IMR-90 (cell line): ENCODE measurements at regions of chr3 and their contacts with region 1.

Region 1: DNA sequence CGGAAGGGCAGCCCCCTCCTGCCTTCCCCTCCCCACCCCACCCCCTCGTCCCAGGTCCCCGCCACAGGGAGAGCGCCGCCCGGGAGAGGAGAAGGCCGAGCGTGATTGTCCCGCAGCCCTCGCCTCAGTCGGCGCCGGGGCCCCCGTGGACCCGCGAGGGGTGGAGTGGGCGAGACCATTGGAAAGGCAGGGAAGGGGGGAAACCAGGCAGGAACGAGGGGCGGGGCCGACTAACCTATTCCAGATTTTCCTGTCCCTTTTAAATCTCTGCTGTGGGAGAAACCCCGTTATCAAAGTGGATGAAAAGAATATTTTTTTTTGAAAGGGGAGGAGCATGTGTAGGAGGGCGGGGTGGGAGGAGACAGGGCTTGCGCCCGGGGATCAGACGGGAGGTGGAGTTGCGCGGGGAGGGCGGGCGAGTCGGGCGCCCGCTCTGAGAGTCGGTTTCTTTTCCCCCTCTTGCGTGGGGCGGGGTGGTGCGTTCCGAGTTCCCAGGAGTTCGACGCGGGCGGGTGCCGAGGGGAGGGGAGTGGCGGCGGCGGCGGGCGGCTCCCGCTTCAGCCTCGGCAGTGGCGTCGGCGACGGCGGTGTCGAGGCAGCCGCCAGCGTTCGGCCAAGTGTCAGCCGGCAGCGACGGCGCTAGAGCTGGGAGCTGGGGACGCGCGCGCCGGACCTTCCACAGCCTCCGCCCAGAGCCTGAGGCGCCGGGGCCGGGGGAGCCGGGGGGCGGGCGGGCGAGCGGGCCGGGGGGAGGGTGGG is at the start of gene NECTIN3:
- DNase-seq: peak; percentile 99
- ATAC-seq: peak; percentile 90
- H3K4me3 ChIP-seq: peak within 1 kb of the TSS; percentile 98
- H3K27ac ChIP-seq: peak within 1 kb of the TSS; percentile 99
- H3K4me1 ChIP-seq: no peaks in the 10 kb centered on the region; the same call in 1 of the 2 replicates
- H3K27me3 ChIP-seq: no peaks in the 10 kb centered on the region
- CTCF ChIP-seq: no peak
- POLR2A ChIP-seq: peak; percentile 72
- RAD21 ChIP-seq: 0 out of 2 replicates have a peak, but pooled peaks have one; percentile 6
- total RNA-seq, gene NECTIN3: 155 and 182 TPM in 2 replicates

Region 2: DNA sequence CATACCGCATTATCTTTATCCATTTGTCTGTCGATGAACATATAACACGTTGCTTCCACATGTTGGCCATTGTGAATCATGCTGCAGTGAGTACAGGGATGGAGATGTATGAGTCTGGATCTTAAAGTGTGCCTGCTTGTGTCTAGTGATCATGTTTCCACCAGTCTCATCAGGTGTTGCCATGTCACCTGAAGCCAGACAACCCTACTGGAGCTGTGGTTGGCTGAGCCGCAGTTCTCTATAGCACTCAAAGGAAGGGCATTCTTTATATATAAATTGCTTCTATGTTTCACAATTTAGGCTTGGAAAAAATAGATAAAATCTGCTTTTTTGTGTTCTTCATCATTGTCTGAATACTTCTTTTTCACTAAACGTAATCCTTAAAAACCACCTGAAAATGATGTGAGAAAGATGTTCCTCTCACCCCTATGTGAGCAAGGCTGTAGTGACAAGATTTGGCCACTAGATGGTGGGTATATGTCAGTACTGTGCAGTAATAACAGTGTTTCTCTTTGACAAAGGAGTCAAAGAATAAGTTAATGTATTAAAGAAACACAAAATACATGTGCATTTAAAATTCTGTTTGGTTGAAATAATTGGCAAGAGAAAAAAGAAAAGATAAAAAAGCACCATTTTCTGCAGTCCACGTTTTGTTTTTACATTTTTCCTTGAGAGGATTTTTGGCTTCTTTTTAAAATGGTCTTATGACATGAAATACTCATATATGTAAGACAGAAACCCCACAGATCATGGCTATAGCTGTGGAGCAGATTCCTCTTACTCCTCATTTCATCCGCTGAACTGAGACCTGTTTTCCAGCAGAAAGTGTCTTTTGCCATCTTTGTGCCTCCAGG is 1339.6 kb before region 1 on chr3:
- CTCF ChIA-PET with region 1: no interaction called
- POLR2A ChIA-PET with region 1: no interaction called
- dilution Hi-C with region 1: no loop called
- in situ Hi-C with region 1: loop called (anchors 5 kb)
- intact Hi-C with region 1: loop called (anchors 2 kb)
- DNase-seq: peak; percentile 72
- ATAC-seq: peak; percentile 99
- H3K4me3 ChIP-seq: no peak overlapping the region
- H3K27ac ChIP-seq: no peak overlapping the region
- H3K4me1 ChIP-seq: no peaks in the 10 kb centered on the region; the same call in 1 of the 2 replicates
- H3K27me3 ChIP-seq: no peaks in the 10 kb centered on the region
- CTCF ChIP-seq: peak; percentile 85
- POLR2A ChIP-seq: no peak
- RAD21 ChIP-seq: peak; percentile 90

Region 3: DNA sequence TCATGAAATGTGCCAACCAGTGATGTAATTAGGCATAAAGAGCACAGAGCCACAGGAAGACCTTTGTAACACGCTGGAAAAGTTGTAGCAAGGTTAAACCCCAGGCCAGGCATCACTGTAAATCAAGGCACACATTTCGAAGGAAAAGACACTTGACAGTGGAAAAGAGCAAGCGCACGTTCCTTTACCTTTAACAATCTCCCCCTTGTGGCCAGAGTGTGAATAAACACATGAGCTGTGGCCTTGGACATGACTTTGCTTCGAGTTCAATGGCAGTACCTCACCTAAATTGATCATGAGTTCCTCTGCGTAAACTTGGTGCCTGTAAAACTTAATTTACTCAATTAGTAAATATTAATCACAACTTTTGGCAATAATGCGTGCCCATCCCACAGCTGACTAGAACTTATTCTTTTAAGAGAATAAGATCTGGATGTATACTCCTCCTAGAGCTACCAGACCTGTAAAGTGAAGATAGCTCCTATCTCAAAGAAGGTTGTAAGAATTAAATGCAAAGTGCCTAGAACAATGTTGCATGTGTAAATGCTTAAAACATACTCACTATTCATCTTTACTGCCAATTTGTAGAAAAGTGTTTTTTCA is 756.8 kb before region 1 on chr3:
- CTCF ChIA-PET with region 1: no interaction called
- POLR2A ChIA-PET with region 1: no interaction called
- dilution Hi-C with region 1: no loop called
- in situ Hi-C with region 1: no loop called
- intact Hi-C with region 1: loop called (anchors 5 kb)
- DNase-seq: peak; percentile 39
- ATAC-seq: no peak
- H3K4me3 ChIP-seq: no peak overlapping the region
- H3K27ac ChIP-seq: no peak overlapping the region
- H3K4me1 ChIP-seq: no peaks in the 10 kb centered on the region; the same call in 1 of the 2 replicates
- H3K27me3 ChIP-seq: no peaks in the 10 kb centered on the region
- CTCF ChIP-seq: peak; percentile 42
- POLR2A ChIP-seq: no peak
- RAD21 ChIP-seq: peak; percentile 44

Region 4: DNA sequence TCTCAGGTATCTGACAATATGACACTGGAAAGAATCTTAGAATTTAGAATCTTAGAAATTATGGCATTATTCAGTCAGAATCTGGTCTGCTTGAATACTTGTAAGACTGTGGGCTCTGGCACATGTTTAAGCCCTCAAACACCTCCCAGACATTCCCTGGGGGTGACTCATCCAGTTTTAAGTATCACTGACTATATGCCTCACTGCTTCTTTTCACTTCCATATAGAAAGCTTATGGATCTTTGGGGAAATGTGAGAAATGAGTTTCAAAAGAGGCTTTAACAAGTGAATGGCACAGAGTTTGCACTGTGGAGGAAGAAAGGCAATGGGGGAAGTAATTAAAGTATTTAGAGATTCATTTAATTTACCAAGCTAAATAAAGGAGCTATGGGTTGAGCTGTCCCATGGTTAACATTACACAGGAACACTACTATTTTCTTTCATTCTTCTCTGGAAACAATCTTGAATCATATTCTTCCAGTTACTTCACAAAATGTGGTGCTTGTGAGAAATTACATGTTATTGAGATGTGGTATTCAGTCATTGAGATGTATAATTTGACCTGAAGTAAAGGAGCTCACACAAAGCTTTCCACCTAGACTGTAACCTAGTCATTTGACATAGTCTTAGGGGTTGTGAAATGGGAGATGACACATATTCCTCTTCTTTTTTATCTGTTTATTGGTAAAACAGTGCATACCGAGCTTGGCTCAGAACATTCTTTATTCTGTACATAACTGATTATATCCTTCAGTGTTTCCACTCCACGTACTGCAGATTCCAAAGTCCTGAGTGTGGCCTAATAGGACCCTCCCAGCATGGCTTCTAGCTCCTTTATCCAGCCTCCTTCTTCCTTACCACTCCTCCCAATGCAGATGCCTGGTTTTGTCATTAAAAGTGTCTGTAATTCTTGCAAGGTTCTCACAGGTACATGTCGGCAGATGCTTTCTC is 544.4 kb before region 1 on chr3:
- CTCF ChIA-PET with region 1: no interaction called
- POLR2A ChIA-PET with region 1: interaction called, 5 read pairs
- dilution Hi-C with region 1: no loop called
- in situ Hi-C with region 1: no loop called
- intact Hi-C with region 1: loop called (anchors 2 kb)
- DNase-seq: peak; percentile 95
- ATAC-seq: peak; percentile 90
- H3K4me3 ChIP-seq: no peak overlapping the region
- H3K27ac ChIP-seq: peak overlapping the region; percentile 67
- H3K4me1 ChIP-seq: peaks cover 15% of the 10 kb centered on the region
- H3K27me3 ChIP-seq: no peaks in the 10 kb centered on the region
- CTCF ChIP-seq: no peak
- POLR2A ChIP-seq: no peak; the same call in 1 of the 2 replicates
- RAD21 ChIP-seq: no peak; the same call in 1 of the 2 replicates

Region 5: DNA sequence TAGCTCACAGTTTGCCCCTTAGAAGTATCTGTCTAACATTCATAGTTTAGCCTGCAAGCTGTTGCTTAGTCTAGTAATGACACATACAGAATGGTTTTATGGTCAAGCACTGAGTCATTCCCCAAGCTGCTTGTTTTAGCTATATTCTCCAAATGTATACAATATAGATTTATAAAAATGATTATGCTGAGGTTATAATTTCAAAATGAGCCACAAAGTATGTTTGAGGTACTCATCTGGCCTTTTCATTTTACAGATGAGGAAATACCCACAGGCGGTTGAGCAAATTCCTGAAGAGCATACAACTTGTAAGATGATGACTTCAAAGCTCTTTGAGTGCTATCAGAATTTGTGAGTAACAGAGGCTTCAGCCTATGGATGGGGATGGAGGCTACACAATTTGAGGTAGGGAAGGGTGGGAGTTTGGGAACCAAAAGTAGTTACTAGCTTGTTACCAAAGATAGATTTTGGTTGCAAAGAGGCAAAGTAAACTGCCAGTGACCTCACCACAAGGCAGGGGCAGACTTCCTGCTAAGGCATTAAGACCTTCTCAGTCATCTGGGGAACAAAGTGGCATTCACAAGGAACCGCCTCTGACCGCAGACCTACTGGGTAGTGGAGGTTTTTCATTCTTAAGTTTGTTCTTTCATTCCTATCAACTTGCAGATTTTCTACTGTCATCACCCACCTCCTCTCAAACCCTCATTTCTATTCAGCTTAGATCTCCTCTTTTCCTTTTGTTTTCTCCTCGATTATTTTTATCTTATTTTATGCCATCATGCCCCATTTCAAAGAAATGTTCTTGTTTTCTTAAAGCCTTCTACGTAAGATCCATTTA is 257.0 kb before region 1 on chr3:
- CTCF ChIA-PET with region 1: no interaction called
- POLR2A ChIA-PET with region 1: interaction called, 4 read pairs
- dilution Hi-C with region 1: no loop called
- in situ Hi-C with region 1: no loop called
- intact Hi-C with region 1: loop called (anchors 1 kb)
- DNase-seq: peak; percentile 98
- ATAC-seq: peak; percentile 90
- H3K4me3 ChIP-seq: peak overlapping the region; percentile 32; the same call in 1 of the 2 replicates
- H3K27ac ChIP-seq: peak overlapping the region; percentile 96
- H3K4me1 ChIP-seq: peaks cover 8% of the 10 kb centered on the region
- H3K27me3 ChIP-seq: no peaks in the 10 kb centered on the region
- CTCF ChIP-seq: no peak
- POLR2A ChIP-seq: no peak
- RAD21 ChIP-seq: peak; percentile 17; the same call in 1 of the 2 replicates